Heart right ventricle (tissue), 16 donors: ENCODE measurements at regions of chr1 and their contacts with region 1.

Region 1: DNA sequence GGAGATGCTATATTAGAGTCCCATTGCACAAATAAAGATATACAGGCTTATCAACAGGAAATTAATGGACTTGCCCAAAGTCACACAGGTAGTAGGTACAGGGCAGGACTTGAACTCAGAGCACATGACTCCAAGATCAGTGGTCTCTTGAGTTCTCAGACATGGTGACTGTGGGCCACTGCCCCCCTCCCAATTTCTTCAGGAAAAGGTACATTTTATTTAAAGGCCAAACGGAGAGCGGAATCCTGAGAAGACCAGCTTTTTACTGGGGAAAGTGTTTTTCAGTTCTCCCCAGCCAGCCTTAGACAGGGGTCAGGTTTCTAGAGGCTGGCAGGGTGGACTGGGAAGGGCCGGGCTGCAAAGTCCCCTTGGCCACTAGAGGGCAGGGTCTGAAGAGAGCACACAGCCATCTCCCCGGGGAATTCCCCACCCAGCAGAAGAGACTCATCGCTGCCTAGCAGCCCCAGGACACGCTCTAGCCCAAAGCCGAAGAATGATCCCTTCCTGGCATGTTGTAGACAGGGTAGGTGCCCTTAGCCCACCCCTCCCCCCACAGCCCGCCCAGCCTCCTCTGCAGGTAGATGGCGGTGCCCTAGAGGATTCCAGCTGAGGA is 29.7 kb downstream of the ACP6 start:
- DNase-seq: peak; percentile 59 to 69
- ATAC-seq: peak; percentile 85 to 96 (median 94)
- H3K4me3 ChIP-seq: no peak overlapping the region
- H3K27ac ChIP-seq: no peak overlapping the region
- H3K4me1 ChIP-seq: peaks cover 0 to 24% (median 11%) of the 10 kb centered on the region in 9 donors
- H3K27me3 ChIP-seq: no peaks in the 10 kb centered on the region
- CTCF ChIP-seq: peak; percentile 47 to 90 (median 76)

Region 2: GRCh38 chr1:147273409-147274336 is 367.0 kb before region 1 on chr1:
- intact Hi-C with region 1: loop called in 4 of 10 experiments (anchors 5 to 10 kb)
- DNase-seq: peak in 1 of 2 donors; percentile 40
- ATAC-seq: peak in 7 of 8 donors; percentile 38 to 82 (median 70)
- H3K4me3 ChIP-seq: no peak overlapping the region
- H3K27ac ChIP-seq: peak overlapping the region in 4 of 10 donors; percentile 18 to 66 (median 40)
- H3K4me1 ChIP-seq: peaks cover 0 to 18% (median 5%) of the 10 kb centered on the region in 9 donors
- H3K27me3 ChIP-seq: no peaks in the 10 kb centered on the region
- CTCF ChIP-seq: peak; percentile 14 to 73 (median 63)

Region 3: DNA sequence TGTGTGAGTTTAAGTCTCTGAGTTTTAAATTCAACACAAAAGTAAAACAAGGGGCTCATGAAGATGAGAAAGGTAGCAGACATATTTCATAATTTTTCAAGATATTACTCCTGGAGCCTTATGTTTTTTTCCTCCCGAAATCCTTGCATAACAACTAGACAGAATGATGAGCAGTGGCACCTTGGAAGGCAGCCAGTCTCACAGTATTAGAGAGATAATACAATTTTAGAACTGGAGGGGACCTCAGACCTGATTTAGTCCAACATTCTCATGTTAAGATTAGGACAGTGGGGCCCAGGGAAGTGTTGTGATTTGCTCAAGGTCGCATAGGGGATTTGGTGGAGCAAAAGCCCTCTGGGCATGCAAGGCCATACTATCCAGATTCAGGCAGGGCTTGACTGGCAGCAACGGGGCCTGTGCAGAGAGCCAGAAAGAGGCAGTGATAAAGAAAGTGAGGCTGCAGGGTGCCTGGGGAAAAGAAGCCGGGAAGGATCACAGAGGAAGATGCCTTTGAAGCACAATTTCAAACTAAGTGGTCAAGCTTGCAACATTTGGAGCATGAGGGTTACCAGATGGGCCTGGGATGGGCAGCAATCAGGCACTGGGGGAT is 130.8 kb before region 1 on chr1:
- intact Hi-C with region 1: loop called in 1 of 10 experiments (anchors 5 kb)
- DNase-seq: peak in 1 of 2 donors; percentile 45
- ATAC-seq: peak; percentile 74 to 95 (median 88)
- H3K4me3 ChIP-seq: peak overlapping the region in 1 of 10 donors; percentile 29
- H3K27ac ChIP-seq: peak overlapping the region in 6 of 10 donors; percentile 64 to 78 (median 71)
- H3K4me1 ChIP-seq: peaks cover 0 to 42% (median 14%) of the 10 kb centered on the region in 9 donors
- H3K27me3 ChIP-seq: no peaks in the 10 kb centered on the region
- CTCF ChIP-seq: no peak